Activated naive CD8-positive, alpha-beta T cell treated with anti-CD3 and anti-CD28 coated beads, Interleukin-2, amount 10 ng/mL, durations not matched to agents 7 days and 5 days (primary cell): ENCODE measurements at regions of chr11 and their contacts with region 1.

Region 1: DNA sequence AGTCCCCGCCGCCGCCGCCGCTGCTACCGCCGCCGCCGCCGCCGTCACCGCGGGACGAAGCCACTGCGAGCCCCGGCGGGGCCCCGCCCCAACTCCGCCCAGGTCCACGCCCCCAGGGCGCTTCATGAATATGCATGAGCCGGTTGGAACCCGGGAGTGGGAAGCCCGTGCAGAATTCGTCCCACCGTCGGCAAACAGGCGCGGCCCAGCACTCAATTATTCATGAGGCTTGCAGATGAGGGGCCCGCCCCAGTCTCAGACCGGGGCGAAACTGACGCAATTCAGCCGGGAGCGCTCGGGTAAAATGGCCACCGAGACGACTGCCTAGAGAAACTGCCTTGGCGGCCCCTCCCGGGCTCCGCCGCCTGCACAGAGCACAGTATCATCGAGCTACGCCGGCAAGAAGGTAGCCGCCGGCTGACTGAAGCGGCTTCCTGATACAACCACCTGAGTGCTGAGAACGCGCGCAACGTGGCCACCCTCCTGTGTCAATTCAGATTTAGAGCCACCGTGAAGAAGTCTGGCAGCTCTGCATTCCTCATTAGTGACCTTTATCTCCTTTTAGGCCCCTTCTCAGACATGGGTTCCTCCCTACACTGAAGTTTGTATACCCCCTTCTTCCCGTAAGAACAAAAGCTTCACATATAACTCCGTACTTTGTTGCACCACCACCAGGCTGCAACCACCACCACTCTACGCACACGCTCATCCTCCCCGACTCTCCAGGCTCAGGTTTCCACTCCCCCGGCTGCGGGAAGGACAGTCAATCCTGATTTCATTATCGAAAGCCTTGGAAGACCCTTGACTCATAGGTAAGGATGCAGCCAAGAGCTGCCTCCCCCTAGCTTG is at the start of gene TNKS1BP1:
- DNase-seq: peak; percentile 91
- ATAC-seq: peak; percentile 93
- H3K4me3 Mint-ChIP-seq: peak within 1 kb of the TSS; percentile 85
- H3K27ac Mint-ChIP-seq: peak within 1 kb of the TSS; percentile 95
- H3K4me1 Mint-ChIP-seq: peaks cover 34% of the 10 kb centered on the region
- H3K27me3 Mint-ChIP-seq: no peaks in the 10 kb centered on the region
- total RNA-seq, gene TNKS1BP1: 15.7 to 18.0 TPM

Region 2: GRCh38 chr11:57311109-57311936 is 13.8 kb before region 1 on chr11:
- POLR2A ChIA-PET with region 1: interaction called, 34 read pairs
- DNase-seq: peak; percentile 82
- ATAC-seq: peak; percentile 97
- H3K4me3 Mint-ChIP-seq: peak overlapping the region; percentile 79
- H3K27ac Mint-ChIP-seq: peak overlapping the region; percentile 59
- H3K4me1 Mint-ChIP-seq: peaks cover 15% of the 10 kb centered on the region
- H3K27me3 Mint-ChIP-seq: no peaks in the 10 kb centered on the region